MCF 10A (cell line): ENCODE measurements at regions of chr10 and their contacts with region 1.

Region 1: DNA sequence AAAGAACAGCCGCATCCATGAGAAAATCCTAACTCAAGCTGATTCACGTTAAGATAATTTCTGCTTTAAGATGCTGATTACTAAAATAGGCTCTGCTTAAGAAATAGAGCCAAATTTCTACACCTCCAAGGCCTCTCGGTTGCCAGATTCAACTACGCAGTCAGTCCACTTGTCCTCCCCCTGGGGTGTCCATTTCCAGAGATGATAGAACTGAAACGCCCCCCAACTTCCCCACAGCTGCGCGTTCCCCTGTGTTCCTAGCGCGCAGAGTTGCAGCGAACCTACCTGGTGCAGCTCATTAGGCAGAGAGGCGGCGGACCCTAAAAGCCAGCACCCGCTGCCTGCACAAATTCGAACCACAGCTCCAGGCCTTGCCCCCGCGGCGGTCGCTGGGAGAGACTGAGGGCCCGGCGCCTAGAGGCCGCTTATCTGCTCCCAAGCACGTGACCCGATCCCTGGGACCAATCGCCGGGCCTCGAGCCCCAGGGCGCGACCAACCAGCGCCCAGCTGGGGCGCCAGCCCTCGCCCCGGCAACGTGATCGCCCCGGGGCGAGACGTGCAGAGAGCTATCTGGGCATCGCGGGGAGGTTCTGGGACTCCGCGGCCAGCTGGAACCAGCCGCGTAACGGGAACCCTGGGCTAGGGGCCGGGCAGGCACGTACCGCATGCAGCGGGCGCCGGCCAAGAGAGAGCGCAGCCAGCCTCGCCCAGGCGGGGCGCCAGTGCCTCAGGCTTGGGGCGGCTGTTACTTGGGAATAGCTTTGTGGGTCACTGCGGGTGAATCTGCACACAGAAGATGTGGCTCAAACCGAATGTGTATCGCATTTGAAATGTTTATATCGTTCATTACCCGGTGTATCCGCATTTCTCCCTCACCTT is at the start of gene PPP1R3C:
- DNase-seq: peak; percentile 45
- H3K4me3 Mint-ChIP-seq: peak within 1 kb of the TSS; percentile 61
- H3K27ac Mint-ChIP-seq: no peak within 1 kb of the TSS
- H3K4me1 Mint-ChIP-seq: no peaks in the 10 kb centered on the region
- H3K27me3 Mint-ChIP-seq: no peaks in the 10 kb centered on the region
- CTCF ChIP-seq: no peak
- total RNA-seq, gene PPP1R3C: 0.30 and 0.47 TPM in 2 replicates

Region 2: GRCh38 chr10:91360400-91360799 is 272.5 kb before region 1 on chr10:
- CTCF ChIA-PET with region 1: no interaction called
- POLR2A ChIA-PET with region 1: no interaction called
- intact Hi-C with region 1: no loop called
- DNase-seq: no peak
- H3K4me3 Mint-ChIP-seq: no peak overlapping the region
- H3K27ac Mint-ChIP-seq: no peak overlapping the region
- H3K4me1 Mint-ChIP-seq: no peaks in the 10 kb centered on the region
- H3K27me3 Mint-ChIP-seq: no peaks in the 10 kb centered on the region
- CTCF ChIP-seq: no peak

Region 3: DNA sequence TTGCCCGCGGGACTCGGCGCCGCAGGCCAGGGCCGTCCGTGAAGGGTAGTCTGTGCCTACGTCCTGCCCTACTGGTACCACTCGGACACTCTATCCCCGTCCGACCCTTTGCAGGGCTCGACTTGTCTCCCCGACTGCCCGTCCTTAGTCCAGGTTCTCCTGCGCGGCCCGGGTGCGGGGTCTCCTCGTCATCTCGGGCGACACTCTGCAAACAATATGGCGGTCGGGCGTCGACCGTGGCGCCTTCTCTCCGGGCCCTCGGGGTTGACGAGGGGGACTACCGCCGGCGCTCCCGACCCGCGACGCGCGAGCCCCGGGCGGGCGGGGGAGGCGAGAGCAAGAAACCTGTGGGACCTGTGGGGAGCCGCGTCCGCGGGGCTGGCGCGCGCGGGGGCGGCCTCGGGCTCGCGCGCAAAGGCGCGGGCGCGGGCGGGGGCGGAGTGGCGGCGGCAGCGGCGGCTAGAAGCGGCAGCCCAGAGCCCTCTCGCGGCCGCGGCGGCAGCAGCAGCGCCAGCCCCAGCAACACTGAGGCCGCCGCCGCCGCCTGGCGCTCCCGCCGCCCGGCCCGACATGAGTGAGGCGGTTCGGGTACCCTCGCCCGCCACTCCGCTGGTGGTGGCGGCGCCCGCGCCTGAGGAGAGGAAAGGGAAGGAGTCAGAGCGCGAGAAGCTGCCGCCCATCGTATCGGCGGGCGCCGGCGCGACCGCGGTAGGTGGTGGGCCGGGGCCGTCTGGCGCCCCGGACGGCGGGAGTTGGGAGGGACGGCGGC is 222.9 kb before region 1 on chr10 and contains the start of gene HECTD2:
- CTCF ChIA-PET with region 1: interaction called, 4 read pairs
- POLR2A ChIA-PET with region 1: interaction called, 3 read pairs
- intact Hi-C with region 1: loop called (anchors 5 kb)
- DNase-seq: peak; percentile 72
- H3K4me3 Mint-ChIP-seq: peak within 1 kb of the TSS; percentile 95
- H3K27ac Mint-ChIP-seq: peak within 1 kb of the TSS; percentile 99
- H3K4me1 Mint-ChIP-seq: peaks cover 7% of the 10 kb centered on the region
- H3K27me3 Mint-ChIP-seq: no peaks in the 10 kb centered on the region
- CTCF ChIP-seq: peak; percentile 37
- total RNA-seq, gene HECTD2: 5.9 and 8.2 TPM in 2 replicates

Region 4: DNA sequence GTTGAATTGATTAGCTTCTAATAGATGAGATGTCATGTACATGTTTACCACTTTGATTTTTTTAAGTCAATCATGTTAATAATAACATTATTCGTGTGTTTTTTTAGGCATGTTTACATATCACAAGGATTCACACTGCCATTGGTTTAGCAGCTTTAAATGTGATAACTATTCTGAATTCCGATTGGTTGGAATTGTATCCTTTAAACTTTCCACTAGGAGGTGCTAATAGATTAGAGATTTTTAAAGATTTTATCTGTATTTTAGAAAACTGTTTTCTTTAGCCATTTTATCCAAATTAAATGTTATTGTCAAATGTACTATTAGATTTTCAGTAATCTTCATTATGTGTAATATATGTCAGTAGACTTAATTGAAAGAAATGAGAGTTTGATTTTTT is 139.6 kb before region 1 on chr10:
- CTCF ChIA-PET with region 1: interaction called, 106 read pairs
- POLR2A ChIA-PET with region 1: interaction called, 18 read pairs
- intact Hi-C with region 1: loop called (anchors 1 kb)
- DNase-seq: peak; percentile 43
- H3K4me3 Mint-ChIP-seq: no peak overlapping the region
- H3K27ac Mint-ChIP-seq: no peak overlapping the region
- H3K4me1 Mint-ChIP-seq: no peaks in the 10 kb centered on the region
- H3K27me3 Mint-ChIP-seq: no peaks in the 10 kb centered on the region
- CTCF ChIP-seq: peak; percentile 36

Region 5: GRCh38 chr10:91551856-91552255 is 81.1 kb before region 1 on chr10:
- CTCF ChIA-PET with region 1: interaction called, 21 read pairs
- POLR2A ChIA-PET with region 1: no interaction called
- intact Hi-C with region 1: loop called (anchors 1 kb)
- DNase-seq: peak; percentile 45
- H3K4me3 Mint-ChIP-seq: no peak overlapping the region
- H3K27ac Mint-ChIP-seq: no peak overlapping the region
- H3K4me1 Mint-ChIP-seq: peaks cover 17% of the 10 kb centered on the region
- H3K27me3 Mint-ChIP-seq: no peaks in the 10 kb centered on the region
- CTCF ChIP-seq: peak; percentile 35

Region 6: DNA sequence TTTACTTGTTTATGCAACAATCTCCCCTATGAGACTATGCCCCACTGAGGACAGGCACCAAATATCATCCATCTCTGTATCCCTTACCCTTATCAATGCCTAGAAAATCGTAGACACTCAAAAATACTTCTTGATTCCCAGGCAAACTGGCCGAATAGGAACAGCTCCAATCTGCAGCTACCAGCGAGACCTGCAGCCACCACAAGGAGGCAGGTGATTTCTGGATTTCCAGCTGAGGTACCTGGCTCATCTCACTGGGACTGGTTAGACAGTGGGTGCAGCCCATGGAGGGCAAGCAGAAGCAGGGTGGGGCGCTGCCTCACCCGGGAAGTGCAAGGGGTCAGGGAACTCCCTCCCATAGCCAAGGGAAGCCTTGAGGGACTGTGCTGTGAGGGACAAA is 10.8 kb after region 1 on chr10:
- CTCF ChIA-PET with region 1: interaction called, 38 read pairs
- POLR2A ChIA-PET with region 1: interaction called, 3 read pairs
- intact Hi-C with region 1: no loop called
- DNase-seq: peak; percentile 55
- H3K4me3 Mint-ChIP-seq: no peak overlapping the region
- H3K27ac Mint-ChIP-seq: no peak overlapping the region
- H3K4me1 Mint-ChIP-seq: peaks cover 18% of the 10 kb centered on the region
- H3K27me3 Mint-ChIP-seq: no peaks in the 10 kb centered on the region
- CTCF ChIP-seq: peak; percentile 24

Region 7: GRCh38 chr10:91694170-91694794 is 61.4 kb after region 1 on chr10:
- CTCF ChIA-PET with region 1: interaction called, 52 read pairs
- POLR2A ChIA-PET with region 1: no interaction called
- intact Hi-C with region 1: loop called (anchors 1 kb)
- DNase-seq: peak; percentile 83
- H3K4me3 Mint-ChIP-seq: no peak overlapping the region
- H3K27ac Mint-ChIP-seq: no peak overlapping the region
- H3K4me1 Mint-ChIP-seq: peaks cover 19% of the 10 kb centered on the region
- H3K27me3 Mint-ChIP-seq: peaks cover 25% of the 10 kb centered on the region
- CTCF ChIP-seq: peak; percentile 79